GM10248 (cell line): ENCODE measurements at regions of chr2 and their contacts with region 1.

Region 1: GRCh38 chr2:32369222-32369621 is 12.4 kb downstream of the BIRC6 start:
- DNase-seq: no peak
- CTCF ChIP-seq: no peak

Region 2: DNA sequence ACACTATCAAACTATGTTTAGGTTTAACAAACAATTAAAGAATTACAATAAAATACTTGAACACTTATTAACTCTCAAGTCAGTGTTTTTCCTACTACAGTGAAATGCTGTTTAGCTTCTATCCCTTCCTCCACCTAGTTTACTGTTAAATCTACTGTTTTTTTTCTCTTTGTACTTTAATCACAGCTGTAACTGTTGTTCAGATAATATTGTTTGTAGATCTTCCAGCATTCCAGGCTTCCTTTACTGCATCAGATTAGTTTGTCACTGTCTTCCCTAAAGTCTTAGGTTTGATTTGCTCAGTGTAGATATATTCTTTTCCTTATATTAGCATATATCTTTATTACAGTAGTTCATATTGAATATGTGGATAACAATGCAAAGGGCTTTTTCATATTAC is 10.1 kb after region 1 on chr2:
- CTCF ChIA-PET with region 1: interaction called, 14 read pairs
- POLR2A ChIA-PET with region 1: no interaction called
- DNase-seq: no peak
- CTCF ChIP-seq: no peak